ENCODE measurements at regions of chr3 and their contacts with region 1.

Region 1: GRCh38 chr3:160956806-160957205 is 148.3 kb downstream of the B3GALNT1 start:
- DNase-seq: no peak
- ATAC-seq: no peak
- H3K4me3 ChIP-seq: no peak overlapping the region
- H3K27ac ChIP-seq: no peak overlapping the region
- H3K4me1 ChIP-seq: peaks cover 10% of the 10 kb centered on the region
- H3K27me3 ChIP-seq: no peaks in the 10 kb centered on the region
- CTCF ChIP-seq: no peak

Region 2: GRCh38 chr3:160099834-160100233 is 857.0 kb before region 1 on chr3:
- intact Hi-C with region 1: no loop called
- DNase-seq: no peak
- ATAC-seq: no peak
- H3K4me3 ChIP-seq: no peak overlapping the region
- H3K27ac ChIP-seq: no peak overlapping the region
- H3K4me1 ChIP-seq: no peaks in the 10 kb centered on the region
- H3K27me3 ChIP-seq: no peaks in the 10 kb centered on the region
- CTCF ChIP-seq: no peak

Region 3: DNA sequence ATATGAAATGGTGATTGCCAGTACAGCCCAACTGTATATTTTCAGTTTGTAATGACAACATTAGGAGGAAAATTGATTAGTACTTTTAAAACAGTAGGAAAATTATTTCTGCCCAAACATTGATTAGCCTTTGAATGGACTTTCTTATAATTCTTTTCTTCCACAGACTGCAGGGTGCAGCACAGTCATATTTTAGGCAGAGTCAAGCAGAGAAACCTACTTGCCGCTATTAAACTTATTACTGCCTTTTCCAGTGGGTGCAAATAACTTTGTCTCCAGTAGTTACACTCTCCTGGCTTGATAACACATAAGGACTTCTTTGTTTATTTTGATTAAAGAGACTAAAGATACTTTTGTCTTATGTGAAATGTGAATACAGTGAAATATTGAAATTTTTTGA is 115.4 kb before region 1 on chr3:
- intact Hi-C with region 1: no loop called
- DNase-seq: no peak
- ATAC-seq: peak in 3 of 4 donors; percentile 47 to 61 (median 53)
- H3K4me3 ChIP-seq: no peak overlapping the region
- H3K27ac ChIP-seq: peak overlapping the region; percentile 71
- H3K4me1 ChIP-seq: peaks cover 35% of the 10 kb centered on the region
- H3K27me3 ChIP-seq: no peaks in the 10 kb centered on the region
- CTCF ChIP-seq: peak; percentile 18

Region 4: GRCh38 chr3:161220850-161221753 is 264.3 kb after region 1 on chr3 and contains the start of gene NMD3:
- intact Hi-C with region 1: loop called in 1 of 2 experiments (anchors 10 kb)
- DNase-seq: peak; percentile 94 to 97
- ATAC-seq: peak; percentile 97 to 99 (median 98)
- H3K4me3 ChIP-seq: peak within 1 kb of the TSS; percentile 83
- H3K27ac ChIP-seq: peak within 1 kb of the TSS; percentile 86
- H3K4me1 ChIP-seq: peaks cover 19% of the 10 kb centered on the region
- H3K27me3 ChIP-seq: no peaks in the 10 kb centered on the region
- CTCF ChIP-seq: no peak
- total RNA-seq, gene NMD3: 29.5 to 53.4 (median 39.6) TPM

Measured in psoas muscle (tissue), 8 donors.